Spleen (tissue), 13 donors: ENCODE measurements at regions of chr16 and their contacts with region 1.

Region 1: DNA sequence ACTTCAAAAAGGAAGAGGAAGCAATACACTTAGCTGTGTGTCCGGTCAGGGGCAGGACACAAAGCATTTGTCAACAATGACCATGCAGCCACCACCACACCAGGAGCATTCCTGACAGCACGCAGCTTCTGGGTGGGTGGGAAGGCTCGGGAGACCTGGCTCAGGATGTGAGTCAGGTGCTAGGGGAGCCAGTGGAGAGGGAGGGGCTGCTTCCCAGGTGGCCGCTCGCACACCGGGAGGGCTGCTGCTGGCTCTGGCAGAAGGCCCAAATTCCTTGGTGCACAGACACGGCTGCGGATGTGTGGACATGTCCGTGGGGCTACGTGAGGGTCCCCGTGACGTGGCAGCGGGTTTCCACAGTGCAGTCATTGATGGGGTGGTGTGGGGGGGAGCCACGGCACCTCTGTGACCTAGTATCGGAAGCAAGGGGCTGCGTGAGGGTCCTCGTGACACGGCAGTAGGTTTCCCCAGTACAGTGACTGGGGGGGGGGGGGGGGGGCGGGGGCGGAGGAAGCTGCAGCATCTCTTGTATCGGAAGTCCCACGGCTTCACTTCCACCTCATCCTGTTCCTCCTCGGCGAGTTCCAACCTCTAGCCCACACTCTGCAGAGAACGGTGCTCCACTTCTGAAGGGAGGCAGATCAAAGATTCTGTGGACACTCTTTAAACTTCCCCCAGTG is 112.8 kb downstream of the ZNF778 start:
- DNase-seq: peak; percentile 83
- H3K4me3 ChIP-seq: peak overlapping the region in 4 of 8 donors; percentile 2 to 48 (median 12)
- H3K27ac ChIP-seq: peak overlapping the region; percentile 19 to 88 (median 73)
- H3K4me1 ChIP-seq: peaks cover 46 to 98% (median 85%) of the 10 kb centered on the region in 6 donors
- H3K27me3 ChIP-seq: no peaks in the 10 kb centered on the region
- CTCF ChIP-seq: no peak
- POLR2A ChIP-seq: no peak

Region 2: DNA sequence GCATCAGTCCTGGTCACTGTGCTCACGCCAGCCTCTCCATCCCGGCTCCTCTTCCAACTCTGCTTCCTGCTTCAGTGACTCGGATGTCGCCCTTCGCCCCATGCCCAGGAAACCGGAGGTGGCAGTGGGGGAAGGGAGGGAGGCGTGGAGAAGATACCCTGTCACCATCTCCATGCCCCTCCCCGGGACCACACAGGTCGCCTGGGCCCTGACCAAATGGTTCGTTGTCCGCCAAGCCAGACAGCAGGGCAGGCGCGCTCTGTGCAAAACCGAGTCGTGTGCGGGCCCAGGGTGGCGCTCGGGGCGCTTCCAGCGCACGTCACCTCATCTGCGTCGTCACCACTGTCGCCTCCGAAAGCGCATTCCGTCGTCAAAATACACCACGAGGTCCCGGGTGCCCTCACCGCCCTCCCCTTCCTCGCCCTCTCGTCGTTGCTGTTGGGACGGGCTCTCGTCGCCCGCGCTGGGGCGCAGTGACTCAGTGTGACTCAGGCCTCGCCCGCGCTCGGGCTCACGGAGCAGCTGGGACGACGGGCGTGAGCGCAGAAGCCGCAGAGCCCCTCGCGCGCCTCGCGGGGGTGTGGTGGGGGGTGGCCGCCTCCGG is 73.6 kb before region 1 on chr16:
- intact Hi-C with region 1: no loop called
- DNase-seq: peak; percentile 81
- H3K4me3 ChIP-seq: peak overlapping the region in 7 of 8 donors; percentile 20 to 69 (median 38)
- H3K27ac ChIP-seq: peak overlapping the region in 3 of 8 donors; percentile 26 to 43 (median 33)
- H3K4me1 ChIP-seq: peaks cover 9 to 36% (median 18%) of the 10 kb centered on the region in 6 donors
- H3K27me3 ChIP-seq: peaks cover 0 to 40% (median 21%) of the 10 kb centered on the region in 7 donors
- CTCF ChIP-seq: no peak
- POLR2A ChIP-seq: no peak

Region 3: GRCh38 chr16:89489040-89489721 is 158.9 kb after region 1 on chr16:
- intact Hi-C with region 1: loop called (anchors 10 kb)
- DNase-seq: peak; percentile 95
- H3K4me3 ChIP-seq: peak overlapping the region; percentile 64 to 92 (median 78)
- H3K27ac ChIP-seq: peak overlapping the region; percentile 92 to 99 (median 98)
- H3K4me1 ChIP-seq: peaks cover 55 to 82% (median 71%) of the 10 kb centered on the region in 6 donors
- H3K27me3 ChIP-seq: no peaks in the 10 kb centered on the region
- CTCF ChIP-seq: peak; percentile 19 to 79 (median 56)
- POLR2A ChIP-seq: peak in 1 of 3 donors; percentile 66

Region 4: GRCh38 chr16:89556750-89557689 is 226.7 kb after region 1 on chr16:
- intact Hi-C with region 1: loop called (anchors 5 kb)
- DNase-seq: peak; percentile 93
- H3K4me3 ChIP-seq: no peak overlapping the region
- H3K27ac ChIP-seq: peak overlapping the region in 1 of 8 donors; percentile 28
- H3K4me1 ChIP-seq: peaks cover 5 to 47% (median 31%) of the 10 kb centered on the region in 6 donors
- H3K27me3 ChIP-seq: no peaks in the 10 kb centered on the region
- CTCF ChIP-seq: peak in 10 of 11 experiments; percentile 65 to 88 (median 78)
- POLR2A ChIP-seq: no peak